GM13977 (cell line): ENCODE measurements at regions of chr9 and their contacts with region 1.

Region 1: GRCh38 chr9:114405294-114406034 is 17.7 kb upstream of the AKNA start:
- DNase-seq: peak; percentile 89
- CTCF ChIP-seq: peak; percentile 83

Region 2: GRCh38 chr9:114653556-114654159 is 248.2 kb after region 1 on chr9:
- in situ Hi-C with region 1: loop called (anchors 5 kb)
- DNase-seq: peak; percentile 77
- CTCF ChIP-seq: peak; percentile 85

Region 3: GRCh38 chr9:114718801-114719221 is 313.3 kb after region 1 on chr9:
- in situ Hi-C with region 1: no loop called
- DNase-seq: peak; percentile 39
- CTCF ChIP-seq: no peak

Region 4: DNA sequence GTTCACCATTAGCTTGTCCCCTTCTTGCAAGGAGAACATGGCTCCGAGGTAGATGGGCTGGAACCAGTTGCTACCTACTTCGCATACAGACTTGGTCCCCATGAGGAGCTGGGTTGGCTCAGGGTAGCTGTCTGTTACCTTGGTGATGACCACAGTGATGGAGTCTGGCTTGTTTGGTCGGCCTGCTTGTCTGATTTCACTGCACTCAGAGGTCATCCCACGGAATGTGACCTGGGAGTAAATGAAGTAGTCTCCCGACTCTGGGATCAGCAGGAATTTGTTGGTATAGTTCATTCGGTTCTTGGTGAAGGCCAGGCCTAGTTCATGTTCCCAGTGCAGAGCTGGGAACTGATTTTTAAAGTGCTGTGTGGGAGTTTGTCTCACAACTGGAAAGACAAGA is 385.1 kb after region 1 on chr9:
- in situ Hi-C with region 1: no loop called
- DNase-seq: no peak
- CTCF ChIP-seq: no peak

Region 5: GRCh38 chr9:115013998-115014397 is 608.5 kb after region 1 on chr9:
- in situ Hi-C with region 1: loop called (anchors 25 kb)
- DNase-seq: peak; percentile 64
- CTCF ChIP-seq: peak; percentile 60